Activated CD4-positive, alpha-beta memory T cell treated with anti-CD3 and anti-CD28 coated beads, Interleukin-2, amount 10 ng/mL, durations not matched to agents 7 days and 5 days (primary cell): ENCODE measurements at regions of chr12 and their contacts with region 1.

Region 1: DNA sequence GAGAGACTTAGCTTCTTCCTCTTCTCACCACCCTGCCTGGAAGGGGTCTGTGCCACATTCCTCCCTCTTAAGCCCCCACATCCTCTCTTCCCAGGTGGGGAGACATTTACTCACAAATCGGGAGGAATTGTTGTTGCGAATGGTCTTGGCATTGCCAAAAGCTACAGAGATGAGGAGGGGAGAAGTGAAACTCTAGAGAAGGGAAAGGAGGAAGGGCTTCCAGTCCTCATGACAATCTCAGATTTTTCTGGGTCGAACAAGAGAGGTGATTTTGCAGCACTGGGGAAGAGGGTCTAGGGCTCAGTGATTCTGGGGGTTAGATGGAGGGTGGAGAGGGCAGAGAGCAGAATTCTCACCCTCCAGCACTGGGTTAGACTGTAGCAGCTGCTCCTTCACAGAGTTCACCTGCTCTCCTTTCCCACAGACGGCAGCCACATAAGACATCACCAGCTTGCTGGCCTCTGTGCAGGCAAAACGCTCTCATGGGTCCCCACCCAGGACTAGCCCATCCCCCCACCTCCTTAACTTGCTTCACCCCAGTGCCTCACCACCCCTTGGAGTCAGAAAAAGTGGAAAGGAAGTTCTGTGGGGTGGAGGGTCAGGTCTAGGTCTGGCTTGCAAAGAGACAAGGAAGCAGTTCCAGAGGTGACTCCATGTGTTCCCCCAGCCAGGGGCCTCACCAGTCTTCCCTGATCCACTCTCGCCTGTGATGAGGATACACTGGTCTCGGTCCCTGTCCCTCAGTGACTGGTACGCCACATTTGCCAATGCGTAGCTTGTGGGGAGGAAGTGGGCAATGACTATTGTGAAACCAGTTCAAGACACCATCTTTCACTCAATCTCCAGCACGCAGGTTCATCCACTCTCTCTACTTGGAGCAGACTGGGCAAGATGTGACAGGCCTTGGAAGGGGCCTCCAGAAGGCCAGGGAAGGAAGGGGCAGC is 2.7 kb downstream of the MYO1A start:
- DNase-seq: peak; percentile 81
- H3K4me3 Mint-ChIP-seq: no peak overlapping the region
- H3K27ac Mint-ChIP-seq: peak overlapping the region; percentile 59
- H3K4me1 Mint-ChIP-seq: peaks cover 28% of the 10 kb centered on the region
- H3K27me3 Mint-ChIP-seq: peaks cover 23% of the 10 kb centered on the region

Region 2: DNA sequence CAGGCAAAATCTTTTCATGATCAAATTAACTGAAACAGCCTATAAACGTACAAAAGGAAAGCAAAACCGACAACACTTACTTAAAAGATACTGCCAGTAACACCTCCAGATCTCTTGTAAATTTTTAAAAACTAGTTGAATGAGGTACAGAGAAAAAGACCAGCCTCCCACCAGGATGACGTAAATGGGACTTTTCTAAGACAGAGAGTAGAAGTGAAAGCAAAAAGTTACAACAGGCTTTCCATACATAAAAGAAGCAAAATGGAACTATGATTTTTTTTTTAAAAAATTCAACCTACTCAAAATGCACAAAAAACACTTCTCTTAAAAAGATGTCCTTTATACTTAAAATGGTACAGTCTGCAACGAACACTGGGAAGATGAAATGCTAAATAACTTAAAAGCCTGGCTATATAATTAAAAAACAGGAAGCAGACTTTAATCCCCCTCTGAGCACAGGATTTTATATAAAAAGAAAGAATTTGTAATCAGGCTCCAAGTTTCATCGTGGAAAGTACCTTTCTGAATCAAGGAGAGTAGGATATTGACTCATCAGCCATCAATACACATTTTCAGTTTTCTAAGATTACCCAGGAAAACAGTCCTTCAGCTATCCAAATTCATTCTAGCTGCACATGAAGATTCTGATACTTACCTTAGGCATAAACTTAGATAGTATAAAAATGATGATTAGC is 16.9 kb after region 1 on chr12:
- CTCF ChIA-PET with region 1: interaction called, 15 read pairs
- POLR2A ChIA-PET with region 1: interaction called, 7 read pairs
- DNase-seq: peak; percentile 54
- H3K4me3 Mint-ChIP-seq: peak overlapping the region; percentile 62
- H3K27ac Mint-ChIP-seq: peak overlapping the region; percentile 89
- H3K4me1 Mint-ChIP-seq: peaks cover 35% of the 10 kb centered on the region
- H3K27me3 Mint-ChIP-seq: no peaks in the 10 kb centered on the region

Region 3: GRCh38 chr12:57175428-57176138 is 128.4 kb after region 1 on chr12:
- CTCF ChIA-PET with region 1: no interaction called
- POLR2A ChIA-PET with region 1: no interaction called
- DNase-seq: peak; percentile 48
- H3K4me3 Mint-ChIP-seq: no peak overlapping the region
- H3K27ac Mint-ChIP-seq: no peak overlapping the region
- H3K4me1 Mint-ChIP-seq: no peaks in the 10 kb centered on the region
- H3K27me3 Mint-ChIP-seq: no peaks in the 10 kb centered on the region